ENCODE measurements at regions of chr16 and their contacts with region 1.

Region 1: DNA sequence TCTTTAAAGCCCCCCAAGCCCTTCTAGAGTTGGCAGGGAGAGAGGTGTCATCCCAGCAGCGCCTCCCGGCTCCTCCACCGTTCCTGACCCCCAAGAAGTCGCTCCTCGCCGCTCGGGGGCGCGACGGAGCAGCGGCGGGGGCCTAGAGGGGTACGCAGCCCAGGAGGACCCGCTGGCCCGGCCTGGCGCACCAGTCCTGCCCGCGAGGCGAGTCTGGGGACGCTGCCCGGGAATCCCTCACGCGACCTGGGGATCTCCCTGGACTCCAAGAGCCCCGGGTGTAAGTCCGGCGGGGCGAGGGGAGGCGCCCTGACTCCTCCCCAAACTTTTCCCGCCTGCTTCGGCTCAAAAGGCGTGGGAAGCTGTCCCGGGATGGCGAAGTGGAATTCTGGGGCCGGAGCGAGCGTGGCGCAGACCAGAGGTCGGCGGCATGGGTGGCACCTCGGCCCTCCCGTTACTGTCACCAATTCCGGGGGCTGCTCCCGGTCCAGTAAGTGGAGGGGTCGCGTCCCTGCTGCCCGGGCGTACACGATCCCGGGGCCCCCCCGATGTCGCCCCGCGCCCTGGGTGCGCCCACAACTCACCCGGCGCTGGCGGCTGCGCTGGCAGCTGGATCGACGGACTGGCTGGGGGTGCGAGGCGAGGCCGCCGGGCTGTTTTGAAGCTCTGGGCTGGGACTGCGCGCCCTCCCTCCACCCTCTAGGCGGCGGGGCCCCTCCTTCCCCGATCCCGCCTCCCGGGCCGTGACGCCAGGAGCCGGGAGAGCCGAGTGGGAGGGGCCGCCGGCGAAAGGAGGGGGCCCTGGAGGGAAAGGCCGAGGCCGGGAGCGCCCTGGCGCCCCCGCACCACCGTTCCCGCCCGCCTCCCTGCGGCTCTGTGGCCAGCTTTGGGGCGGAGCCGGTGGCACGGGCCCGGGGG is at the start of gene EMP2:
- DNase-seq: peak; percentile 79
- H3K4me3 ChIP-seq: peak within 1 kb of the TSS; percentile 98
- H3K27ac ChIP-seq: peak within 1 kb of the TSS; percentile 99
- H3K4me1 ChIP-seq: peaks cover 16% of the 10 kb centered on the region
- H3K27me3 ChIP-seq: no peaks in the 10 kb centered on the region
- CTCF ChIP-seq: peak; percentile 29 to 90 (median 54)
- POLR2A ChIP-seq: peak; percentile 92
- total RNA-seq, gene EMP2: 40.8 to 87.2 TPM

Region 2: GRCh38 chr16:10737068-10737625 is 156.9 kb after region 1 on chr16:
- intact Hi-C with region 1: loop called (anchors 5 kb)
- DNase-seq: peak; percentile 63
- H3K4me3 ChIP-seq: no peak overlapping the region
- H3K27ac ChIP-seq: no peak overlapping the region
- H3K4me1 ChIP-seq: no peaks in the 10 kb centered on the region
- H3K27me3 ChIP-seq: no peaks in the 10 kb centered on the region
- CTCF ChIP-seq: peak; percentile 90 to 98 (median 94)
- POLR2A ChIP-seq: no peak